ENCODE measurements at regions of chr5 and their contacts with region 1.

Region 1: GRCh38 chr5:172868924-172869591 is 35.0 kb downstream of the ERGIC1 start:
- DNase-seq: peak; percentile 81
- H3K4me3 ChIP-seq: no peak overlapping the region
- H3K27ac ChIP-seq: peak overlapping the region; percentile 81
- H3K4me1 ChIP-seq: peaks cover 90% of the 10 kb centered on the region
- H3K27me3 ChIP-seq: no peaks in the 10 kb centered on the region
- CTCF ChIP-seq: peak in 1 of 3 experiments; percentile 19
- POLR2A ChIP-seq: no peak

Region 2: GRCh38 chr5:171633816-171634470 is 1235.1 kb before region 1 on chr5:
- intact Hi-C with region 1: no loop called
- DNase-seq: no peak
- H3K4me3 ChIP-seq: no peak overlapping the region
- H3K27ac ChIP-seq: no peak overlapping the region
- H3K4me1 ChIP-seq: peaks cover 5% of the 10 kb centered on the region
- H3K27me3 ChIP-seq: no peaks in the 10 kb centered on the region
- CTCF ChIP-seq: no peak
- POLR2A ChIP-seq: no peak

Region 3: GRCh38 chr5:172156541-172156994 is 712.5 kb before region 1 on chr5:
- intact Hi-C with region 1: no loop called
- DNase-seq: no peak
- H3K4me3 ChIP-seq: no peak overlapping the region
- H3K27ac ChIP-seq: no peak overlapping the region
- H3K4me1 ChIP-seq: peaks cover 4% of the 10 kb centered on the region
- H3K27me3 ChIP-seq: no peaks in the 10 kb centered on the region
- CTCF ChIP-seq: no peak
- POLR2A ChIP-seq: no peak

Region 4: GRCh38 chr5:172770675-172771438 is 98.2 kb before region 1 on chr5 and contains the start of gene DUSP1:
- intact Hi-C with region 1: loop called (anchors 10 kb)
- DNase-seq: peak; percentile 100
- H3K4me3 ChIP-seq: peak within 1 kb of the TSS; percentile 92 to 95
- H3K27ac ChIP-seq: peak within 1 kb of the TSS; percentile 100
- H3K4me1 ChIP-seq: peaks cover 29% of the 10 kb centered on the region
- H3K27me3 ChIP-seq: no peaks in the 10 kb centered on the region
- CTCF ChIP-seq: peak in 2 of 3 experiments; percentile 56 to 77
- POLR2A ChIP-seq: peak; percentile 99
- total RNA-seq, gene DUSP1: 159 to 172 TPM

Region 5: GRCh38 chr5:172795318-172795977 is 73.6 kb before region 1 on chr5:
- intact Hi-C with region 1: loop called (anchors 10 kb)
- DNase-seq: peak; percentile 90
- H3K4me3 ChIP-seq: no peak overlapping the region
- H3K27ac ChIP-seq: peak overlapping the region; percentile 68 to 78
- H3K4me1 ChIP-seq: peaks cover 10% of the 10 kb centered on the region
- H3K27me3 ChIP-seq: no peaks in the 10 kb centered on the region
- CTCF ChIP-seq: peak in 1 of 3 experiments; percentile 20
- POLR2A ChIP-seq: no peak

Region 6: DNA sequence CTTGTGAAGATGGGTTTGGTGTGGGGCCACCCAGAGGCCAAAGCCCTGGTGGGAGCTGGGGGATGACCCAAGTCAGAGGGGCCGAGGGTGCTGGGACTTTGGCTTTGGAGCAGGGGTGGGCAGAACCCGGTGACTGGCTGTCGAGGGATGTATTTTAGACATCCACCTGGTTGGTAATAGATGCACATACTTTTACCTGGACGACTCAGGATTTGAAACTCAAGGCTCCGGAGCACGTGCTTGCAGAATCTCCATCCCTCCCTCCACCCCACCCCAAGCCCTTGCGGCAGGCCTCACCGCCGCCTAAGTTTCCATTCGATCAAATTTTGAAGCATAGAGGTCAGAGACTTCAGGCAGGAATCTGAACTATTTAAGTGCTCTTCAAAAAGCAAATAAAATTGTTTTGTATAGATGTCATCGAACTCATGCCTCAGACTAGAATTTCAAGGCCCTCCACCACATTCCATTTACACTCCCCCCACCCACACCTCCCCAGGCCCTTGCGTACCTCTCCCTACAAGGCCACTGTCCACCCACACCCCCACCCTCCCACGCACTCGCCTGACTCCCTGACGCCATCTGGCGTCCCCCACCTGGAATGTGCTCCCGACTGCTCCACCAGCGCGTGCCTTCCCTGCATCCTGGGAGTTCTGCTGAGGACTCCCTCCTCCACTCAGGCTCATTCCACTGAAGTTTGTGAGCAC is 33.6 kb after region 1 on chr5:
- intact Hi-C with region 1: loop called (anchors 5 kb)
- DNase-seq: peak; percentile 93
- H3K4me3 ChIP-seq: no peak overlapping the region
- H3K27ac ChIP-seq: peak overlapping the region; percentile 91 to 92
- H3K4me1 ChIP-seq: peaks cover 58% of the 10 kb centered on the region
- H3K27me3 ChIP-seq: no peaks in the 10 kb centered on the region
- CTCF ChIP-seq: peak; percentile 21 to 47 (median 45)
- POLR2A ChIP-seq: no peak

Measured in testis (tissue), 5 donors.